Psoas muscle (tissue), 8 donors: ENCODE measurements at regions of chr3 and their contacts with region 1.

Region 1: GRCh38 chr3:126259411-126260391 is 79.3 kb upstream of the ALDH1L1 start:
- DNase-seq: peak; percentile 66 to 88
- ATAC-seq: peak; percentile 93 to 97 (median 94)
- H3K4me3 ChIP-seq: peak overlapping the region; percentile 58
- H3K27ac ChIP-seq: peak overlapping the region; percentile 95
- H3K4me1 ChIP-seq: peaks cover 20% of the 10 kb centered on the region
- H3K27me3 ChIP-seq: no peaks in the 10 kb centered on the region
- CTCF ChIP-seq: peak; percentile 79

Region 2: DNA sequence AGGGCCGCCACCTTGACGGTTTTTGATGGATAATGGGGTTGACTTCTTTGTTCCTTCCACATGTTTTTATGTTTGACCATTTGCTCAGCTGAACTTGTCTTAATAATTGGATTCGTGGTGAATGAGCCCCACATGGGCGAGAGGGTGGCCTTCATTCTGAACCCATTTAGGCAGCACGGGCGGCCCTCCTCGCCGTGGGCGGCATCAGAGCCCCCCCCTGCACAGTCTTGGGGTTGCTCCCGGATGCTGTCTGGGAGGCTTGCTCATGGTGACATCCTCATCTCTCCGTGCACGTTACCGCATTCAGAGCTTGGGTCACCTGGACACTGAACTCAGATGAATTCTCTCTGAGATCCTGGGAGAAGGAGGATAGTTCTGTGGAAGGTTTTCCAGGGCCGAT is 492.1 kb before region 1 on chr3:
- intact Hi-C with region 1: no loop called
- DNase-seq: no peak
- ATAC-seq: no peak
- H3K4me3 ChIP-seq: no peak overlapping the region
- H3K27ac ChIP-seq: no peak overlapping the region
- H3K4me1 ChIP-seq: no peaks in the 10 kb centered on the region
- H3K27me3 ChIP-seq: peaks cover 0 to 2% (median 0%) of the 10 kb centered on the region in 3 donors
- CTCF ChIP-seq: no peak

Region 3: DNA sequence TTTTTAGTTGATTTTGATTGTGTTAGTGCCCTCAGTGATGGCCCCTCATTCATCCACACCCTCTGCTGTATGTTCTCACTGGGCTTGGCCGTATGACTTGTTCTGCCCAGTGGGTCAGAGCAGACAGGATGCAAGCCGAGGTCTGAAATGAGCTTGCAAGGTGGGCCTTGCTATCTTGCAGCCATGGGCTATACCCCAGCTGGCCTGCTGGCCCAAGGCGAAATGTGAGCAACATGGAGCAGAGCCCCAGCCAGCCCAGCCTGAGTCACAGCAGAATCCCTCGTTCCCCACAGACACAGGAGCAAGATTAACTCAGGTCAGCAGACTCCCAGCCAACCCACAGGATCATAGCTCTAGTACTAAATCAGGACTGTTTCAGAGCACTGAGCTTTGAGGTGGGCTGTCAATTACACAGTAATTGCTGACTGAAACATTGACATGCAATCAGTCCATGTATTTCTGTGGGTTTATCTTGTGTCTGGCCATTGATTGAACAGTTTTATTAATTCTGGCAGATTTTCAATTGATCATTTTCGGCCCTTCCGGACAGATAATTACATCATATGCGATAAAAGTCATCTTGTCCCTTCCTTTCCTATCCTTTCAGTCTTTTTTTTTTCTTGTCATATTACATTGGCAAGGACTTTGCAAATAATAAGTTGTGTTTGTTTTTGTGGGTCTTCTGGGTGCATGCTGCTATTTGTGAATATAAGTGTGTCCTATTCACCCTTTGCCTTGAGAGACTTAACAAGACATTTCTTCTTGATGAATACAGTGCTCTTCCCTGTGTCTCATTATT is 70.4 kb after region 1 on chr3:
- intact Hi-C with region 1: no loop called
- DNase-seq: peak in 1 of 2 donors; percentile 32
- ATAC-seq: no peak
- H3K4me3 ChIP-seq: no peak overlapping the region
- H3K27ac ChIP-seq: no peak overlapping the region
- H3K4me1 ChIP-seq: no peaks in the 10 kb centered on the region
- H3K27me3 ChIP-seq: no peaks in the 10 kb centered on the region
- CTCF ChIP-seq: no peak

Region 4: DNA sequence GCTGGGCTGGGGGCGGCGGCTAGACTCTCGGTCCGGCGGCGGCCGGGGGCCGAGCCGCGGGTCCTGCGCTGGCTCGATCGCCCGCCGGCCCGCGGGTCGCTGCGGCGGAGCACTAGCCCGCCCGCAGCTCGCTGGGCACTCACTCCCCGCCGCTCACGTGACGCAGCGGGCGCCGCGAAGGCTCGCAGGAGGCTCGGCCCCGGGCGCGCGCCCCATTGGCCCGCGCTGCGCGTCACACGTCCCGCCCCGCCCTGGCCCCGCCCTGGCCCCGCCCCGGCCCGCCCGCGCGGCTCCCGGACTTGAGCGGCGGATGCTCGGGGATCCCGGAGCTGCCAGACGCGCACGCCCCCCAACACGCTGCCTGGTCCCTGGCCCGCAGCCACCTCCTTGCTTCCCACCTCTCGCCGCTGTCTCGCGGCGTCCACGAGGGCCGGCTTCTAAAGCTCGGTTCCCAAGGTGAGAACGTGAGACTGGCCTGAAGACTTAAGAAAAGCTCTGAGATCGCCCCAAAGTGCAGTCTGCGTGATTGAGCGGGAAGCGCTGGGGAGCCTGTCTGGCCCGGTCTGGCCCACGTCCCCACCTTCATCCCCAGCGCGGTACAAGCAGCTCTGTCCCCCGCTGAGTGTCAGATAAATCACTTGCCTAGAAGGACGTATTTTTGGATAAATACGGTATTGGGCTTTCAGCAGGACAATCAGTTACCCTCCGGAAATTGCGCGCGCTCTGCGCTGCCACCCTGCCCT is 97.8 kb after region 1 on chr3 and contains the start of gene KLF15:
- intact Hi-C with region 1: loop called (anchors 2 to 5 kb)
- DNase-seq: peak; percentile 92 to 95
- ATAC-seq: peak; percentile 68 to 75 (median 70)
- H3K4me3 ChIP-seq: peak within 1 kb of the TSS; percentile 74
- H3K27ac ChIP-seq: peak within 1 kb of the TSS; percentile 99
- H3K4me1 ChIP-seq: peaks cover 43% of the 10 kb centered on the region
- H3K27me3 ChIP-seq: no peaks in the 10 kb centered on the region
- CTCF ChIP-seq: no peak
- total RNA-seq, gene KLF15: 13.2 to 64.0 (median 33.0) TPM

Region 5: GRCh38 chr3:126373682-126374601 is 114.2 kb after region 1 on chr3:
- intact Hi-C with region 1: loop called (anchors 5 kb)
- DNase-seq: peak in 1 of 2 donors; percentile 76
- ATAC-seq: peak; percentile 48 to 69 (median 61)
- H3K4me3 ChIP-seq: no peak overlapping the region
- H3K27ac ChIP-seq: peak overlapping the region; percentile 69
- H3K4me1 ChIP-seq: peaks cover 47% of the 10 kb centered on the region
- H3K27me3 ChIP-seq: no peaks in the 10 kb centered on the region
- CTCF ChIP-seq: no peak

Region 6: GRCh38 chr3:126389112-126389793 is 129.6 kb after region 1 on chr3:
- intact Hi-C with region 1: loop called (anchors 1 to 2 kb)
- DNase-seq: peak; percentile 91 to 97
- ATAC-seq: peak; percentile 95 to 98 (median 96)
- H3K4me3 ChIP-seq: peak overlapping the region; percentile 59
- H3K27ac ChIP-seq: peak overlapping the region; percentile 91
- H3K4me1 ChIP-seq: peaks cover 5% of the 10 kb centered on the region
- H3K27me3 ChIP-seq: peaks cover 0 to 4% (median 0%) of the 10 kb centered on the region in 3 donors
- CTCF ChIP-seq: peak; percentile 96

Region 7: GRCh38 chr3:126475413-126476114 is 215.9 kb after region 1 on chr3 and contains the start of gene ZXDC:
- intact Hi-C with region 1: loop called (anchors 5 to 10 kb)
- DNase-seq: peak; percentile 96 to 98
- ATAC-seq: peak; percentile 76 to 90 (median 80)
- H3K4me3 ChIP-seq: peak within 1 kb of the TSS; percentile 87
- H3K27ac ChIP-seq: peak within 1 kb of the TSS; percentile 96
- H3K4me1 ChIP-seq: peaks cover 42% of the 10 kb centered on the region
- H3K27me3 ChIP-seq: no peaks in the 10 kb centered on the region
- CTCF ChIP-seq: peak; percentile 54
- total RNA-seq, gene ZXDC: 30.3 to 39.5 (median 35.9) TPM